Endothelial cell of umbilical vein (primary cell): ENCODE measurements at regions of chr11 and their contacts with region 1.

Region 1: DNA sequence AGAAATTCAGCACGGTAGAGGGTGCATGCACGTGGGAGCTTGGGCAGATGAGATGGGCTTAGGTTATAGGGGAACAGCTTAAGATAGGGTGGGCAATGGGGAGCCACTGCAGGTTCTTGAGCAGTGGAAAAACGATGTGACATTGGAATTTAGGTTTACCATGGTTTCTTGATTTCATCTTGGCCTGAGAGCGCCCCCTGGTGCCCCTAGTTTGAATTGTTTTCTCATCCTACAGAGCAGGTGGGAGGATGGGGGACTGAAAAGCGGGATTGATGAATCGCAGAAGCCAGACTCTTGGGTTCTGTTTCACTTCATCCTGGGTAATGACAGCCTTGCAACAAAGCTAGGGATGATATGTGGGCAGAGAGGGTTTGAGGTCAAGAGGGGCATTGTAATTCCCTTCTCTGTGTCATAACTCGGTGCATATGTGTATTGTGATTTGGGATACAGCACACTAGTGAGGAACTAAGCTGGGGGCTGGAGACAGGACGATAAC is 6.7 kb upstream of the MCAM start:
- DNase-seq: peak; percentile 76
- H3K4me3 ChIP-seq: no peak overlapping the region
- H3K27ac ChIP-seq: no peak overlapping the region
- H3K4me1 ChIP-seq: peaks cover 39% of the 10 kb centered on the region
- H3K27me3 ChIP-seq: no peaks in the 10 kb centered on the region
- CTCF ChIP-seq: peak; percentile 80 to 86
- POLR2A ChIP-seq: no peak

Region 2: GRCh38 chr11:118610804-118611795 is 712.5 kb before region 1 on chr11:
- CTCF ChIA-PET with region 1: no interaction called
- POLR2A ChIA-PET with region 1: no interaction called
- dilution Hi-C with region 1: no loop called
- intact Hi-C with region 1: loop called (anchors 2 kb)
- DNase-seq: peak; percentile 78
- H3K4me3 ChIP-seq: peak overlapping the region; percentile 39 to 60 (median 59)
- H3K27ac ChIP-seq: peak overlapping the region; percentile 80
- H3K4me1 ChIP-seq: peaks cover 51% of the 10 kb centered on the region
- H3K27me3 ChIP-seq: no peaks in the 10 kb centered on the region
- CTCF ChIP-seq: peak; percentile 82 to 98
- POLR2A ChIP-seq: no peak

Region 3: GRCh38 chr11:119018074-119018938 is 305.3 kb before region 1 on chr11 and contains the starts of genes RPS25 and TRAPPC4:
- CTCF ChIA-PET with region 1: interaction called, 3 read pairs
- POLR2A ChIA-PET with region 1: no interaction called
- dilution Hi-C with region 1: no loop called
- intact Hi-C with region 1: loop called (anchors 1 kb)
- DNase-seq: peak; percentile 97
- H3K4me3 ChIP-seq: peak within 1 kb of the TSS; percentile 79 to 98 (median 95)
- H3K27ac ChIP-seq: peak within 1 kb of the TSS; percentile 60
- H3K4me1 ChIP-seq: peaks cover 18% of the 10 kb centered on the region
- H3K27me3 ChIP-seq: no peaks in the 10 kb centered on the region
- CTCF ChIP-seq: no peak
- POLR2A ChIP-seq: peak; percentile 92
- total RNA-seq, gene RPS25: 992 and 1,027 TPM in 2 replicates
- total RNA-seq, gene TRAPPC4: 64.2 and 79.3 TPM in 2 replicates

Region 4: DNA sequence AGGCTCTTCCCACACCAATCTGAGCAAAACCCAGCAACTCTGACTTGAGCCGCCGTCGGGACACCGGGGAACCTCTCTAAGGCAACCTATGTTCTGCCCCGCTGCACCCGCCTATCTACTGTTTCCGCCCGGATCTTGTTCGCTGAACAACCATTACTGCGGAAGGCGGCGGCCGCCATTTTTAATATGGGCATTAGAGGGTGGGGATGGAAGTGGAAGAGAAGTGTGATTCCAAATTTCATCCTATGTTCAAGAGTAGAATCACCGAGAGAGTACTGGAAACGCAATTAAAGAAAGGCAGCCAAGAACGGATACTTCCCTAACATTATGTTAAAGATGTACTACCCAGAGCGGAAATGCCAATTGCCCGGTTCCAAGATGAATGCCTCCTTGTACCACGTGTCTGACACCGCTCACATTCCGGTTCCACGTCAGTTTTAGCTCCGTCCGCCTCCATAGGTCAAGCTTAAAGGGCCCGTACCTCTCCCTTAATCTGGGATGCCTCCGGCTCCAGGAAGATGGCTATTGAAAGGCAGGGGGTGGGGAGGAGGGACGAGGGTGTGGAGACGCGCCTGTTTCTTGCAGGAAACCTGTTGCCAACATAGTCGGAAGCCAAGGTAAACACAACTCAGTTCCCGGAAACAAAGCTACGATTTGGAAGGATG is 221.7 kb before region 1 on chr11 and contains the start of gene DPAGT1:
- CTCF ChIA-PET with region 1: interaction called, 18 read pairs
- POLR2A ChIA-PET with region 1: interaction called, 6 read pairs
- dilution Hi-C with region 1: no loop called
- intact Hi-C with region 1: loop called (anchors 1 kb)
- DNase-seq: peak; percentile 96
- H3K4me3 ChIP-seq: peak within 1 kb of the TSS; percentile 81 to 97 (median 86)
- H3K27ac ChIP-seq: peak within 1 kb of the TSS; percentile 94
- H3K4me1 ChIP-seq: peaks cover 21% of the 10 kb centered on the region
- H3K27me3 ChIP-seq: no peaks in the 10 kb centered on the region
- CTCF ChIP-seq: no peak
- POLR2A ChIP-seq: no peak
- total RNA-seq, gene DPAGT1: 48.4 and 62.0 TPM in 2 replicates

Region 5: GRCh38 chr11:119168471-119169281 is 154.9 kb before region 1 on chr11 and contains the start of gene NLRX1:
- CTCF ChIA-PET with region 1: interaction called, 4 read pairs
- POLR2A ChIA-PET with region 1: no interaction called
- dilution Hi-C with region 1: no loop called
- intact Hi-C with region 1: loop called (anchors 1 kb)
- DNase-seq: peak; percentile 79
- H3K4me3 ChIP-seq: peak within 1 kb of the TSS; percentile 6 to 48 (median 17)
- H3K27ac ChIP-seq: peak within 1 kb of the TSS; percentile 55
- H3K4me1 ChIP-seq: peaks cover 11% of the 10 kb centered on the region
- H3K27me3 ChIP-seq: no peaks in the 10 kb centered on the region
- CTCF ChIP-seq: peak; percentile 89 to 94
- POLR2A ChIP-seq: peak; percentile 71
- total RNA-seq, gene NLRX1: 14.6 and 15.1 TPM in 2 replicates

Region 6: DNA sequence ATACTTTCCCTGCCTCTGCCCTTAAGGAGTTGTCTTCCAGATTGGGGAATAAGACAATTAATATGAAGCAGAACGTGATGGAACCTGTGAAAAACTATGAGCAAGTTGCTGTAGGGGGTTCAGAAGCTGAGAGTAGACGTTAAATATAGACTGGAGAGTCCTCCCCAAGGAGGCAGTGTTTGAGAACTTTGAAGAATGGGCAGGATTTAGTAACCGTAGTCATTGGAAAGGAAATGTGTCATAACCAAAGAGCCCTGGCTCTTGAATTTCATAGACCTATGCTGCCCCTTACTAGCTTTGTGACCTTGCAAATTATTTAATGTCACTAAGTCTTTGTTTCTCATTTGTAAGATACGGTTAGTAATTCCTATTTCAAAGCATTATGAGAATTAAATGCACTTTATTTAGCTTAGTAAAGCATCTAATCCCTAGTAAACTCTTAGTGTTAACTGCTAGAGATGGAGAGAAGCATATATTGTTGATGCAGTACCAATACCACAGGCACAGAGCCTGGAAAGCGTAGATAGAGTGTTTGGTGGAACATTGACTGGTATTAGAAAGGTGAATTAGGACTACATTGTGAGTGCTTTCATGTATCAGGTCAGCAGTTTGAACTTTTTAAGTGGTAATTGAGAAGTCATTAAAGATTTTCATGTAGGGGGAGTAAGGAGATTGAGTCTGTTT is 60.8 kb before region 1 on chr11:
- CTCF ChIA-PET with region 1: interaction called, 7 read pairs
- POLR2A ChIA-PET with region 1: no interaction called
- dilution Hi-C with region 1: no loop called
- intact Hi-C with region 1: loop called (anchors 2 kb)
- DNase-seq: peak; percentile 71
- H3K4me3 ChIP-seq: no peak overlapping the region
- H3K27ac ChIP-seq: peak overlapping the region; percentile 73
- H3K4me1 ChIP-seq: peaks cover 24% of the 10 kb centered on the region
- H3K27me3 ChIP-seq: no peaks in the 10 kb centered on the region
- CTCF ChIP-seq: peak in 1 of 2 donors; percentile 4
- POLR2A ChIP-seq: no peak

Region 7: DNA sequence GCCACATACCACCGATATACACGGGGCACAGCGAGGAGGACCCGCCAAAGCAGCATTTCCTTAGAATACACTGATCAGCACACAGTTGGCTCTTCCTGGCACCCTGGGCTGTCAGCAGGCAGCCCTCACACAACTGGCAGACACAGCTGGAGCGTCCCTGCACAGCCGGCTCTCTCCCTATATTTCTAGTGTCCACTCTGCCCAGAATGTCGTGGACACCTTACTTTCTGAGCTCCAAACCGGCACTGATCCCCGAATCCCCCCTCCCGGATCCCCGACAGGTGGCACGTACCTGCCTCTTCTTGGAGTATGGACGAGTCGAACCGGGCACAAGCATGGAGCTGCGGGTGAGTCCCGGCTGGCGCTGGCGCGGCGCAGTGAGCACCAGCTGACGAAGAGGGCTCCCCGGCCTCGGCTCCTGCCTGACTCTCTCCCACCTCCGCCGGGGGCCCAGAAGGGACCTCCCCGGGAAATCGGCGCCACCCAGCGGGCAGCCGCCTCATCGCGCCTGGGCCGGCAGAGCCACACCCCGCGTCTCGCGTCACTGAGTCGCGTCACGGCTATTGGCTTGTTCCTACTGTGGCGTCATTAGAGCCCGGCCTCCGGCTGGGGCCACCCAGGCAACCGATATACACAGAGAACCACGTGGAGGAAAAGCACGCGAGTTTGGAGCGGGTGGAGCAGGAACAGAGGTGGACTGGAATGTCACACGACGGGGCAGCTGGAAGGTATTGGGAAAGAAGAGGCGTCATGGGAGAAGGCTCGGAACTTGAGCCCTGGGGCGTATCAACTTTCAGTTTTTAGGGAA is 57.8 kb after region 1 on chr11 and contains the start of gene USP2:
- CTCF ChIA-PET with region 1: no interaction called
- POLR2A ChIA-PET with region 1: no interaction called
- dilution Hi-C with region 1: no loop called
- intact Hi-C with region 1: loop called (anchors 2 kb)
- DNase-seq: peak; percentile 95
- H3K4me3 ChIP-seq: peak within 1 kb of the TSS in 2 of 3 experiments; percentile 41 to 51
- H3K27ac ChIP-seq: no peak within 1 kb of the TSS
- H3K4me1 ChIP-seq: peaks cover 10% of the 10 kb centered on the region
- H3K27me3 ChIP-seq: peaks cover 7 to 14% of the 10 kb centered on the region in 2 experiments
- CTCF ChIP-seq: peak; percentile 92
- POLR2A ChIP-seq: no peak
- total RNA-seq, gene USP2: 1.1 and 1.2 TPM in 2 replicates